CD4-positive, alpha-beta T cell (primary cell): ENCODE measurements at regions of chr12 and their contacts with region 1.

Region 1: GRCh38 chr12:21677622-21678277 is 20.1 kb upstream of the LDHB start:
- DNase-seq: peak in 11 of 14 experiments; percentile 7 to 62 (median 18)
- ATAC-seq: peak; percentile 42
- H3K4me3 ChIP-seq: peak overlapping the region; percentile 46
- H3K4me3 Mint-ChIP-seq: peak overlapping the region; percentile 77
- H3K27ac ChIP-seq: peak overlapping the region; percentile 43 to 72
- H3K27ac Mint-ChIP-seq: peak overlapping the region; percentile 83
- H3K4me1 ChIP-seq: peaks cover 40% of the 10 kb centered on the region
- H3K4me1 Mint-ChIP-seq: peaks cover 56% of the 10 kb centered on the region
- H3K27me3 ChIP-seq: no peaks in the 10 kb centered on the region
- H3K27me3 Mint-ChIP-seq: no peaks in the 10 kb centered on the region
- CTCF ChIP-seq: no peak

Region 2: DNA sequence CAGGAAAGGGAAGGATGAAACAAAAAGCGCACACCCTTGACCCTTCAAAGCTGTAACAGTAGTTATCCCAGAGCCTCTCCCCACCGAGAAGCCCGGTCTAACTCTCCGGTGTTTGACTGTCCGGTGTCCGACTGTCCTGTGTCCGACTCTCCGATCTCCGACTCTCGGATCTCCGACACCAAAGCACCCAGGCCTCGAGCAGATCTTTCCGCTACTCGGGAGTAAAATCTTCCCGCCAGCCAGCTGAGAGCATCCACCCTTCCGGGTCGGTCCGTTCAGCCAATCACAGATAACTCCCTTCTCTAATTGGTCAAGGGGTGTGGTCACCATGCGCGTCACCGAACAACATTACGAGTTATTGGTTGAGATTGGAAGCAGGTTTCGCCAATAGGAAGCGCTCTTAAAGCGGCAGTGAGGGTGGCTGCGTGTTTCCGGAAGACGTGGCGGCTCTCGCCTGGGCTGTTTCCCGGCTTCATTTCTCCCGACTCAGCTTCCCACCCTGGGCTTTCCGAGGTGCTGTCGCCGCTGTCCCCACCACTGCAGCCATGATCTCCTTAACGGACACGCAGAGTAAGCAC is 176.3 kb before region 1 on chr12 and contains the starts of genes GOLT1B and RECQL:
- CTCF ChIA-PET with region 1: interaction called, 6 read pairs
- POLR2A ChIA-PET with region 1: interaction called, 14 read pairs
- intact Hi-C with region 1: loop called (anchors 1 to 10 kb)
- DNase-seq: peak; percentile 75 to 97 (median 82)
- ATAC-seq: peak; percentile 93
- H3K4me3 ChIP-seq: peak within 1 kb of the TSS; percentile 88
- H3K4me3 Mint-ChIP-seq: no peak within 1 kb of the TSS
- H3K27ac ChIP-seq: peak within 1 kb of the TSS; percentile 58 to 79
- H3K27ac Mint-ChIP-seq: no peak within 1 kb of the TSS
- H3K4me1 ChIP-seq: peaks cover 25% of the 10 kb centered on the region
- H3K4me1 Mint-ChIP-seq: peaks cover 52% of the 10 kb centered on the region
- H3K27me3 ChIP-seq: no peaks in the 10 kb centered on the region
- H3K27me3 Mint-ChIP-seq: no peaks in the 10 kb centered on the region
- CTCF ChIP-seq: no peak
- total RNA-seq, gene GOLT1B: 41.5 to 46.3 TPM
- total RNA-seq, gene RECQL: 11.1 to 16.0 TPM

Region 3: DNA sequence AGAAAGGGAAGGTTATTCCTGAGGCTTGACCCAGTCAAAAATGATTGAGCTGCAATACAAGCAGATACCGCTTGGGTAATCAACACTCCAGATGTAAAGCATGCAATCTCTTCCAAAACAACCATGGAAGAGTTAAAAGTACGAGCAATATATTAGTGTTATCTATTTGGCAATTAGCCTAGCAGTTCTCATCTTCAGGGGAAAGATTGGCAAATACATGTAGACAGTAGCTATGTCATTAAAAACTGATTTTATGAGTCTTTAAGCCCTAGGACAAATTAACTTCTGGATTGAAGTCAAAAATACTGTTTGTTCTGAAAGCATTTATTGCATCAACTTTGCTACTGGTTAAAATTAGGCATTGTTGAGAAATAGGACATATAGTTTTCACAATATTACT is 63.8 kb before region 1 on chr12:
- CTCF ChIA-PET with region 1: interaction called, 8 read pairs
- POLR2A ChIA-PET with region 1: interaction called, 16 read pairs
- intact Hi-C with region 1: loop called (anchors 1 to 2 kb)
- DNase-seq: no peak
- ATAC-seq: no peak
- H3K4me3 ChIP-seq: no peak overlapping the region
- H3K4me3 Mint-ChIP-seq: peak overlapping the region; percentile 43
- H3K27ac ChIP-seq: peak overlapping the region; percentile 58 to 61
- H3K27ac Mint-ChIP-seq: peak overlapping the region; percentile 84
- H3K4me1 ChIP-seq: peaks cover 24% of the 10 kb centered on the region
- H3K4me1 Mint-ChIP-seq: peaks cover 63% of the 10 kb centered on the region
- H3K27me3 ChIP-seq: no peaks in the 10 kb centered on the region
- H3K27me3 Mint-ChIP-seq: no peaks in the 10 kb centered on the region
- CTCF ChIP-seq: no peak

Region 4: GRCh38 chr12:21650833-21651396 is 26.8 kb before region 1 on chr12:
- CTCF ChIA-PET with region 1: interaction called, 7 read pairs
- POLR2A ChIA-PET with region 1: interaction called, 152 read pairs
- intact Hi-C with region 1: loop called (anchors 1 to 2 kb)
- DNase-seq: no peak
- ATAC-seq: no peak
- H3K4me3 ChIP-seq: no peak overlapping the region
- H3K4me3 Mint-ChIP-seq: peak overlapping the region; percentile 9
- H3K27ac ChIP-seq: no peak overlapping the region
- H3K27ac Mint-ChIP-seq: peak overlapping the region; percentile 28
- H3K4me1 ChIP-seq: peaks cover 32% of the 10 kb centered on the region
- H3K4me1 Mint-ChIP-seq: peaks cover 97% of the 10 kb centered on the region
- H3K27me3 ChIP-seq: no peaks in the 10 kb centered on the region
- H3K27me3 Mint-ChIP-seq: no peaks in the 10 kb centered on the region
- CTCF ChIP-seq: no peak

Region 5: GRCh38 chr12:21666722-21667121 is 11.0 kb before region 1 on chr12:
- CTCF ChIA-PET with region 1: interaction called, 10 read pairs
- POLR2A ChIA-PET with region 1: interaction called, 5 read pairs
- intact Hi-C with region 1: loop called in 1 of 2 experiments (anchors 2 kb)
- DNase-seq: no peak
- ATAC-seq: no peak
- H3K4me3 ChIP-seq: no peak overlapping the region
- H3K4me3 Mint-ChIP-seq: no peak overlapping the region
- H3K27ac ChIP-seq: no peak overlapping the region
- H3K27ac Mint-ChIP-seq: no peak overlapping the region
- H3K4me1 ChIP-seq: no peaks in the 10 kb centered on the region
- H3K4me1 Mint-ChIP-seq: no peaks in the 10 kb centered on the region
- H3K27me3 ChIP-seq: no peaks in the 10 kb centered on the region
- H3K27me3 Mint-ChIP-seq: no peaks in the 10 kb centered on the region
- CTCF ChIP-seq: no peak